ENCODE measurements at regions of chr1 and their contacts with region 1.

Region 1: DNA sequence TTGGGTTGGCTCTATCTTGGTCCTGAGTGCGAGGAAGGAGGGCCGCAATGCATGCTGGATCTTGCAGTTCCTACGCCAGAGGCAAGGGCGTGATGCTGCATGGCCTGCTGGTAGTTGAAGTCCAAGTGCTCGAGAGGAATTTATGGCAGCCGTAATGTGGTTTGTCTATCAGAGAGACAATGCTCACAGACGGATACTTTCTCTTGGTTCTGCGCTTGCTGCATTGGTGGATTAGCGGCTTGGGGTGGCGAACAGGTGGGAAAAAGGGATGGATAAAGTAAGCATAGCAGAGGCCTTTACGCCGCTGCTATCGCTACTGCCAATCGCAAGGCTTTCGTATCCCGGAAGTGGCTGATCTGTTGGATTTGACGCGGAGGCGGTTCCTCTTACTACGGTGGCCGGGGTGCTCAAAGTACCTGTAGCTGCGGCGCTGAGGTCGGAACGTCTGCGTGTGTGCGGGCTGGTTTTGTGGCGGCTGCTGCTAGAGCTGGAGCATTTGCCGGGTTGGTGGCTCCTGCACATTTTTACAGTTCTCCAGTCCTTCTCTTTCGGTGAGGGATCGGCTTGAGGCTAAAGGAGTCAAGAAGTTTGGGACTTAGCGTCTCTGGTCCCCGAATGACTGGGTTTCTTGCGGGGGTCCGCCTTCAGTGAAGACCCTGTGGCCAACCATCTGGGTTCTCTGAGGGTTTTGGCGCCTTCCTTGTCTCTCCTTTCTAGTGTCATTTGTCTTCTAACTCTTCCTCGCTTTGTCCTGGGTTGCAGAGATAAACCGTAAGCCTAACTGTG is at the start of gene ATG4C:
- DNase-seq: peak; percentile 72 to 97 (median 96)
- ATAC-seq: peak; percentile 96
- H3K4me3 ChIP-seq: peak within 1 kb of the TSS; percentile 94
- H3K4me3 Mint-ChIP-seq: peak within 1 kb of the TSS in 1 of 10 donors; percentile 14
- H3K27ac ChIP-seq: peak within 1 kb of the TSS; percentile 87
- H3K27ac Mint-ChIP-seq: no peak within 1 kb of the TSS
- H3K4me1 ChIP-seq: peaks cover 6 to 7% of the 10 kb centered on the region in 2 donors
- H3K4me1 Mint-ChIP-seq: peaks cover 9 to 21% (median 20%) of the 10 kb centered on the region in 7 donors
- H3K27me3 ChIP-seq: peaks cover 0 to 6% of the 10 kb centered on the region in 2 donors
- H3K27me3 Mint-ChIP-seq: peaks cover 0 to 16% (median 3%) of the 10 kb centered on the region in 5 donors
- total RNA-seq, gene ATG4C: 6.8 to 16.5 (median 11.5) TPM

Region 2: DNA sequence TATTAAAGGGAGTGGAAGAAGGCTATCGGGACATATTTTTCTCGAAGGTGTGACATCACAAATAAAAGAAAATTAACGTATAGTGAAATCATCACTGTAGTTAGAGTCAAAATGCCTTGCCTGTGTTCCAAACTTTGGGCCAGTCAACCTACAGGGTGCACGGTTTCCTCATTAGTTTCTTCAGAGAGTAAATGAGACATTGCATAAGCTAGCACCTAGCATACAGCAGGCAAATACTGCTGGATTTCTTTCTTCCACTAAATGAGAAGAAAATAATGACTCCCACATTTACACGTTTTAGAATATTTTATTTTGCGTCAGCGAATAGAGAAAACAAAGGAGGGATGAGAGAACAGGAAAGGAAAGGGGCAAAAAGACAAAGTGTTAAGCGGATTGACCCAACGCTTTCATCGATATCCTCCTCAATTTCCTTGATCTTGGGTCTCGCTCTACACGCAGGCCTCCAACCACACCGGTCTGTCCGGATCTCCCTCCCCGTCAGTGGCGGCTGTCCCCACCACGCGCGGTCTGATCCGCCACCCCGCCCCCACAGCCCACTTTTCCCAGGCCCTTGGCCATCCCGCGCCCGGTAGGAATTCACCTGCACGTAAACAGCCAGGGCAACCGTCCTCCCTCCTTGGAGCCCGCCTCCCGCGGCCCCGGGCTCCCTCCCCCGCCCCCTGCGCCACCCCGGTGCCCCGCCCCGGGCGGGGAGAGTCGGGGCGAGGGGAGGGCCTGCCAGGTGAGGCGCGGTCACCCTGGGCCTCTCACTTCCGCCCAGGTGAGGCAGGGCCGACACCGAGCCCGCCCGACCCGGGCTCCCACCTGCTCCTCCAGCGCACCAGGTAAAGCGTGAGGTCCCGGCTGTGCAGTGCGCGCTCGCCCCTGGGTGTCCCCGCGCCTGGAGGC is 1042.0 kb before region 1 on chr1 and contains the start of gene PATJ:
- CTCF ChIA-PET with region 1: no interaction called
- POLR2A ChIA-PET with region 1: no interaction called
- intact Hi-C with region 1: loop called in 1 of 2 experiments (anchors 5 kb)
- DNase-seq: peak; percentile 56 to 78 (median 73)
- ATAC-seq: peak; percentile 93
- H3K4me3 ChIP-seq: peak within 1 kb of the TSS; percentile 62
- H3K4me3 Mint-ChIP-seq: peak within 1 kb of the TSS; percentile 94 to 100 (median 97)
- H3K27ac ChIP-seq: peak within 1 kb of the TSS; percentile 76
- H3K27ac Mint-ChIP-seq: peak within 1 kb of the TSS; percentile 88 to 99 (median 96)
- H3K4me1 ChIP-seq: peaks cover 9 to 13% of the 10 kb centered on the region in 2 donors
- H3K4me1 Mint-ChIP-seq: peaks cover 17 to 46% (median 35%) of the 10 kb centered on the region in 7 donors
- H3K27me3 ChIP-seq: no peaks in the 10 kb centered on the region
- H3K27me3 Mint-ChIP-seq: no peaks in the 10 kb centered on the region
- total RNA-seq, gene PATJ: 13.4 to 64.5 (median 34.0) TPM

Region 3: GRCh38 chr1:62436466-62437256 is 347.3 kb before region 1 on chr1 and contains the start of gene USP1:
- CTCF ChIA-PET with region 1: no interaction called
- POLR2A ChIA-PET with region 1: interaction called, 12 read pairs
- intact Hi-C with region 1: loop called (anchors 1 kb)
- DNase-seq: peak in 8 of 9 donors; percentile 85 to 100 (median 98)
- ATAC-seq: peak; percentile 90
- H3K4me3 ChIP-seq: peak within 1 kb of the TSS; percentile 98
- H3K4me3 Mint-ChIP-seq: peak within 1 kb of the TSS; percentile 90 to 98 (median 96)
- H3K27ac ChIP-seq: peak within 1 kb of the TSS; percentile 95
- H3K27ac Mint-ChIP-seq: peak within 1 kb of the TSS; percentile 97 to 100 (median 99)
- H3K4me1 ChIP-seq: peaks cover 13 to 29% of the 10 kb centered on the region in 2 donors
- H3K4me1 Mint-ChIP-seq: peaks cover 13 to 56% (median 43%) of the 10 kb centered on the region in 7 donors
- H3K27me3 ChIP-seq: no peaks in the 10 kb centered on the region
- H3K27me3 Mint-ChIP-seq: peaks cover 0 to 7% (median 0%) of the 10 kb centered on the region in 5 donors
- total RNA-seq, gene USP1: 20.5 to 65.7 (median 38.8) TPM

Region 4: GRCh38 chr1:63367215-63368103 is 583.5 kb after region 1 on chr1 and contains the start of gene ALG6:
- CTCF ChIA-PET with region 1: no interaction called
- POLR2A ChIA-PET with region 1: no interaction called
- intact Hi-C with region 1: loop called (anchors 1 to 2 kb)
- DNase-seq: peak; percentile 66 to 98 (median 84)
- ATAC-seq: peak; percentile 99
- H3K4me3 ChIP-seq: peak within 1 kb of the TSS; percentile 95
- H3K4me3 Mint-ChIP-seq: peak within 1 kb of the TSS; percentile 91 to 99 (median 94)
- H3K27ac ChIP-seq: peak within 1 kb of the TSS; percentile 72
- H3K27ac Mint-ChIP-seq: peak within 1 kb of the TSS; percentile 79 to 93 (median 84)
- H3K4me1 ChIP-seq: peaks cover 0 to 7% of the 10 kb centered on the region in 2 donors
- H3K4me1 Mint-ChIP-seq: peaks cover 23 to 46% (median 36%) of the 10 kb centered on the region in 7 donors
- H3K27me3 ChIP-seq: no peaks in the 10 kb centered on the region
- H3K27me3 Mint-ChIP-seq: peaks cover 0 to 7% (median 0%) of the 10 kb centered on the region in 5 donors
- total RNA-seq, gene ALG6: 16.1 to 29.8 (median 27.3) TPM

Region 5: DNA sequence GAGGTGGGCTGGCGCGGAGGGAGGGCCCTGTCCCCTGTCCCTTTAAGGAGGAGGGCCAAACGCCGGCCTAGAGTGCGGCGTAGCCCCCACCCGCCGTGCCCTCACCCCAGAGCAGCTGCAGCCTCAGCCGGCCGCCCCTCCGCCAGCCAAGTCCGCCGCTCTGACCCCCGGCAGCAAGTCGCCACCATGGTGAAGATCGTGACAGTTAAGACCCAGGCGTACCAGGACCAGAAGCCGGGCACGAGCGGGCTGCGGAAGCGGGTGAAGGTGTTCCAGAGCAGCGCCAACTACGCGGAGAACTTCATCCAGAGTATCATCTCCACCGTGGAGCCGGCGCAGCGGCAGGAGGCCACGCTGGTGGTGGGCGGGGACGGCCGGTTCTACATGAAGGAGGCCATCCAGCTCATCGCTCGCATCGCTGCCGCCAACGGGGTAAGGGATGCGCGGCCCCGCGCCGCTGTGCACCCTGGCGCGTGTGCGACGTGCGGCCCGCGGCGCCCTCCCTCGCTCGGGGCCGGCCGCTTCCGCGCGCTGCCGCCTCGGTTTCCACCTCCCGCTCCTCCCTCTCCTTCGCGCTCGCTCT is 809.5 kb after region 1 on chr1 and contains the start of gene PGM1:
- CTCF ChIA-PET with region 1: no interaction called
- POLR2A ChIA-PET with region 1: no interaction called
- intact Hi-C with region 1: loop called (anchors 1 to 5 kb)
- DNase-seq: peak; percentile 63 to 81 (median 76)
- ATAC-seq: peak; percentile 91
- H3K4me3 ChIP-seq: peak within 1 kb of the TSS; percentile 71
- H3K4me3 Mint-ChIP-seq: peak within 1 kb of the TSS; percentile 96 to 99 (median 98)
- H3K27ac ChIP-seq: peak within 1 kb of the TSS; percentile 90
- H3K27ac Mint-ChIP-seq: peak within 1 kb of the TSS; percentile 95 to 99 (median 99)
- H3K4me1 ChIP-seq: peaks cover 0 to 7% of the 10 kb centered on the region in 2 donors
- H3K4me1 Mint-ChIP-seq: peaks cover 21 to 49% (median 40%) of the 10 kb centered on the region in 7 donors
- H3K27me3 ChIP-seq: no peaks in the 10 kb centered on the region
- H3K27me3 Mint-ChIP-seq: no peaks in the 10 kb centered on the region
- total RNA-seq, gene PGM1: 11.9 to 57.2 (median 16.1) TPM